RWPE1 (cell line): ENCODE measurements at regions of chr17 and their contacts with region 1.

Region 1: GRCh38 chr17:82205719-82206508 is 6.7 kb downstream of the CCDC57 start:
- DNase-seq: peak; percentile 86
- H3K27ac ChIP-seq: peak overlapping the region; percentile 95
- CTCF ChIP-seq: peak; percentile 97

Region 2: DNA sequence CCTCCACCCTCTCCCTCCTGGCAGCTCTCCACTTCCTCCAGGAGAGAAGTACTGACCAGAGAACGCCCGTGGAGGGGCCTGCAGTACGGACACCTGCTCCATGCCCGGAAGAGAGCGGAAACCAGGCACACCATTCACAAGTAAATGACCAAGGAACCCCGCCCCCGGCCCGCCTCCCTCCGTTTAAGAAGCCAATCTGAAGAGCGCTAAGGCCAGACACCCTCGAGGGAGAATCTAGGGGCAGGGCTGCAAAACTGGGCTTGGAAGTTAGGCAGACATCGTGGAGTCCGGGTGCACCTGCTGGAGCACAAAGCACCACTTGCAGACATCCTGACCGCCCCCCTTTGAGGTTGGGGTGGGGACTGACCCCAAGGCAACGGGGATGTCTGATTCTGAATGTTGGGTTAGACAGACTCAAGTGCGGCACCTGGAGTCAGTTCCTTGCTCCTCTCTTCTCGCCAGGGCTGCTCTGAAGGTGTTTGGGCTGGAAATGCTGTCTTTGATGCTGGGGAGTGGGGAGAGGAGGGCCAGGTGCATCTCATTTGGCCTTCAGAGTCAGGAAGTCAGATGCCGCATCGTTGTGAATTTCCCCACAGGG is 652.8 kb before region 1 on chr17:
- CTCF ChIA-PET with region 1: no interaction called
- POLR2A ChIA-PET with region 1: no interaction called
- DNase-seq: peak; percentile 81
- H3K27ac ChIP-seq: peak overlapping the region; percentile 96
- CTCF ChIP-seq: no peak

Region 3: DNA sequence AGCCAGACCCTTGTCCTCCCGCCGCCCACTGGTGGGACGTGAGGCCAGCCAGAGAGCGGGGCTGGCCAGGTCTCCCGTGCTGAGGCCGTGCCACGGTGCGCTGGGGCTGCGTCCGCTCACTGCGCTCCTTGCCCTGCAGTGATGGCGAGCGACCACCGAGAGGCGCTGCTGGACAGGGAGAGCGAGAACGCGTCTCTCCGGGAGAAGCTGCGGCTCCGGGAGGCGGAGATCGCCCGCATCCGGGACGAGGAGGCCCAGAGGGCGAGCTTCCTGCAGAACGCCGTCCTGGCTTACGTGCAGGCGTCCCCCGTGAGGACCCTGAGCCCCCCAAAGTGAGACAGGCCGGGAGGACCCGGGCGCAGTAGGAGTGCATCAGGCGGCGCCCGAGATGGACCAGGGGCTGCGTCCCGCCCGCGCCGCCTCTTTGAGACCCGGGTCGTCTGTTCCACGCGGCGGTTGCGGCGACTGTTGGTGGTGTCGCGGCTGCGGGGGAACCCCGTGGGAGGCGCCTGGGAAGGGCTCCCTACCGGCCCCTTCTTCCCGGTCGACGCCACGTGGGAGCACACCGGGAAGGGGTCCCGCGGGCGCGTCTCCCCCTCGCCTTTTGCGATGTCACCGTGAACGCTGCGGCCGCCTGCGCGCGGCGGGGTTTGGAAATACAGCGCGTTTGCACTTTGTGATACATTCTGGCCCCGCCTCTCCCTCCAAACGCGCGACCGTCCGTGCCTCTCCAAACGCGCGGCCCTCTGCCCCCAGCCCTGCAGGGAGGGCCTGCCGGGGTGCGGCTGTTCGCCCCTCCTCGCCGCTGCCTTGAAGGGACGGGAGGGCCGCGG is 175.2 kb before region 1 on chr17:
- CTCF ChIA-PET with region 1: interaction called, 10 read pairs
- POLR2A ChIA-PET with region 1: no interaction called
- DNase-seq: peak; percentile 74
- H3K27ac ChIP-seq: peak overlapping the region; percentile 82
- CTCF ChIP-seq: peak; percentile 92

Region 4: DNA sequence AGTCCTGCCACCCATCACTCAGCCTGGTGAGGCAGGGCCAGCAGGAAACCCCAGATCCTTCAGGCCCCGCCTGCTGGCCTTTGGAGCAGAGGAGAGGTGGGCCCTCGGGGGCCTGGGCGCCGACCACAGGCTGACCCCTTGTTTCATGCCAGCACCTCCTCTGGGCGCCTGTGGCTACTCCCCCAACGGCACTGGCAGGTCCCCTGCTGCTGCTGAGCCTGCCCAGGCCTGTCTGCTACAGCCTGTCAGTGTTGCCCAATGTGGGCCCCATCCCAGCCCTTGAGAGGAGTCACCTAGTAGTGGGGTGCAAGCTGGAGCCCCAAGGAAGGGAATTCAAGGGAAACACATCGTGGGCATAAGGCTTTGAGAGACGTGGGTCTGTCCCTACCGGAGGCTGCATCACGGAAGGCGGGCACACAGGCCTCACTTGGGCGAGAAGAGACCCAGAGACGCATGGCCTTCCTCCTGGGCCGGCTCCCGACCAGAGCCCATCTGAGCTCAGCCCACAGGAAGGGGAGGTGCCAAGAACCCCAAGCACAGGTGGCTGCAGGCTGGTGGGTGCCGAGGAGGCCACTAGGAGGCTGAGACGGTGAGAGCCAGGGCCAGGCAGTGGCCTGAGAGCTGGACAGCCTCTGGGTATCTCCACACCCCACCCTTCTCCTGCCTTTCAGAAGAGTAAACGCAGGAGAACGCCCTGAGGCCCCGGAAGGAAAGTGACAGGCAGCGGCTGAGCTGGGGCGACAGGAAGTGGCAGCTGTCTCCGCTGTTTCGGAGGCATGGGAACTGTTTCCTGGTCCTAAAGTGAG is 99.8 kb before region 1 on chr17:
- CTCF ChIA-PET with region 1: no interaction called
- POLR2A ChIA-PET with region 1: no interaction called
- DNase-seq: peak; percentile 67
- H3K27ac ChIP-seq: peak overlapping the region; percentile 96
- CTCF ChIP-seq: peak; percentile 55

Region 5: GRCh38 chr17:82230627-82231311 is 24.9 kb after region 1 on chr17:
- CTCF ChIA-PET with region 1: interaction called, 21 read pairs
- POLR2A ChIA-PET with region 1: interaction called, 6 read pairs
- DNase-seq: no peak
- H3K27ac ChIP-seq: peak overlapping the region; percentile 99
- CTCF ChIP-seq: peak; percentile 56; the same call in 1 of the 2 replicates

Region 6: DNA sequence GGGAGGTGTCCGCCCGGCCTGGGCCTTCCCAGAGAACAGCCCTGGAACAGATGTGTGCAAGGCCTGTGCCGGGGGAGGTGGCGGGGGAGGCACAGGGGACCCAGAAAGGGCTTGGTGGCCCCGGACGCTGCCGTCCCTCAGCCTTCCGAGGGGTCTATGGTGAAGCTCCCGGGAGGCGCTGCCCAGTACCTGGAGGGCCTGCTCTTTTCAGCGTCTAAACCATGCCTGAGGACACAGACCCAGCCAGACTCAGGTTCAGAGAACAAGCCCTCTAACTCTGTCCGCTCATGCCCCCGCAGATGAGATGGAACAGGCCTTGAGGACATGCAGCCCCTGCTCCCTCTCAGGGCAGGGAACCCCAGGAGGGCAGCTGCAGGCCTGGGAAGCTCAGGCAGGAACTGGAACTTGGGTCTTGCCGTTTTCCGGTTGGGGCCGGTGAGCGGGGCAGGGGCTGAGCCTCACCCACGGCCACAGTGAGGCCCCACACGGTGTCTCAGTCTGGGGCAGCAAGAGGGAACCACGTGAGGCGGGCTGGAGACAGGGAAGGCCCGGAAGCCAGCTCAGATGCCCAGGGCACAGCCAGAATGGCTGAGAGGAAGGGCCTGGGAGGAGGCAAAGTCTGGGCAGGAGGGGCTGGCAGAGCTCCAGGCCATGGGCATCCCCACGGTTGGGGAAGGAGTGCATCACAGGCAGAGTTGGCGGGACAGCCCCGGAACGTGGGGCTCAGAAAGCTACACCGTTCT is 35.4 kb after region 1 on chr17:
- CTCF ChIA-PET with region 1: interaction called, 12 read pairs
- POLR2A ChIA-PET with region 1: interaction called, 4 read pairs
- DNase-seq: peak; percentile 74
- H3K27ac ChIP-seq: peak overlapping the region; percentile 99
- CTCF ChIP-seq: no peak